Activated CD4-positive, alpha-beta T cell treated with anti-CD3 and anti-CD28 coated beads for 36 hours (primary cell): ENCODE measurements at regions of chr11 and their contacts with region 1.

Region 1: DNA sequence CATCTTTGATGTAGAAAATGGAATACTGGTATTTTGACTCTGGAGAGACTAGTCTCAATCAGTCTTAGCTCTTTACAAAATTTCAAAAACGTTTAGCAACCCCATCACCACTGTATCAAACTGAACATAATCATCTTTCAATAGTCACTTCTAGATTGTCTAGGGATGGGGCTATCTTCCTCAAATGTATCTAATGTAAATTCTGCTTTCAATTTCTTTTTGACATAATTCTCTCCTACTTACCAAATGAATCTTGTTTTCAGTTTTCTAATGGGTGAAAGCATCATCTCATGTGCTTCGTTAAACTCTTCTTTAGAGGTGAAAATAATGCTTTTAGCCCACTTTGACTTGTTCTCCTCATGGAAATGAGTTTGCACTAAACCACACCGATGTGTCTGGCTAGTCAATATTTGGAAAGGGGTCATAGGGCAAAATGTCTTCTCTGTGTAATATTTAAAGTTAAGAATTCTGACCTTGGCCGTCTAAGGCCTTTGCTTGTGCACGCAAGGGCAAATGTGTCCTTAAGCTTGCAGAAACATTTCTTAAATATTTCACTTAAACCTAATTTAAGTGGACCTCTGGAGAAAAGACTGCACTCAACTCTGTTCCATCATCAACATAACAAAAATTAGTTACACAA is 5.2 kb downstream of the SIK3 start:
- DNase-seq: no peak
- ATAC-seq: peak; percentile 77
- H3K4me3 Mint-ChIP-seq: peak overlapping the region; percentile 32
- H3K27ac Mint-ChIP-seq: peak overlapping the region; percentile 76
- H3K4me1 Mint-ChIP-seq: peaks cover 82% of the 10 kb centered on the region
- H3K27me3 Mint-ChIP-seq: no peaks in the 10 kb centered on the region

Region 2: GRCh38 chr11:117037279-117037974 is 55.6 kb before region 1 on chr11:
- CTCF ChIA-PET with region 1: no interaction called
- POLR2A ChIA-PET with region 1: interaction called, 3 read pairs
- intact Hi-C with region 1: loop called in 1 of 2 experiments (anchors 2 kb)
- DNase-seq: no peak
- ATAC-seq: peak; percentile 33
- H3K4me3 Mint-ChIP-seq: no peak overlapping the region
- H3K27ac Mint-ChIP-seq: peak overlapping the region; percentile 61
- H3K4me1 Mint-ChIP-seq: peaks cover 49% of the 10 kb centered on the region
- H3K27me3 Mint-ChIP-seq: no peaks in the 10 kb centered on the region

Region 3: GRCh38 chr11:117081908-117082307 is 11.2 kb before region 1 on chr11:
- CTCF ChIA-PET with region 1: interaction called, 7 read pairs
- POLR2A ChIA-PET with region 1: interaction called, 6 read pairs
- intact Hi-C with region 1: loop called (anchors 1 to 2 kb)
- DNase-seq: no peak
- ATAC-seq: no peak
- H3K4me3 Mint-ChIP-seq: no peak overlapping the region
- H3K27ac Mint-ChIP-seq: no peak overlapping the region
- H3K4me1 Mint-ChIP-seq: peaks cover 56% of the 10 kb centered on the region
- H3K27me3 Mint-ChIP-seq: no peaks in the 10 kb centered on the region

Region 4: GRCh38 chr11:117126223-117126965 is 33.3 kb after region 1 on chr11:
- CTCF ChIA-PET with region 1: no interaction called
- POLR2A ChIA-PET with region 1: no interaction called
- intact Hi-C with region 1: no loop called
- DNase-seq: no peak
- ATAC-seq: no peak
- H3K4me3 Mint-ChIP-seq: no peak overlapping the region
- H3K27ac Mint-ChIP-seq: no peak overlapping the region
- H3K4me1 Mint-ChIP-seq: no peaks in the 10 kb centered on the region
- H3K27me3 Mint-ChIP-seq: no peaks in the 10 kb centered on the region